ENCODE measurements at regions of chrX and their contacts with region 1.

Region 1: GRCh38 chrX:16882702-16883486 is 12.7 kb upstream of the RBBP7 start:
- DNase-seq: peak; percentile 73
- H3K4me3 Mint-ChIP-seq: peak overlapping the region; percentile 56
- H3K27ac Mint-ChIP-seq: no peak overlapping the region
- H3K4me1 Mint-ChIP-seq: peaks cover 8% of the 10 kb centered on the region
- H3K27me3 Mint-ChIP-seq: peaks cover 13% of the 10 kb centered on the region

Region 2: DNA sequence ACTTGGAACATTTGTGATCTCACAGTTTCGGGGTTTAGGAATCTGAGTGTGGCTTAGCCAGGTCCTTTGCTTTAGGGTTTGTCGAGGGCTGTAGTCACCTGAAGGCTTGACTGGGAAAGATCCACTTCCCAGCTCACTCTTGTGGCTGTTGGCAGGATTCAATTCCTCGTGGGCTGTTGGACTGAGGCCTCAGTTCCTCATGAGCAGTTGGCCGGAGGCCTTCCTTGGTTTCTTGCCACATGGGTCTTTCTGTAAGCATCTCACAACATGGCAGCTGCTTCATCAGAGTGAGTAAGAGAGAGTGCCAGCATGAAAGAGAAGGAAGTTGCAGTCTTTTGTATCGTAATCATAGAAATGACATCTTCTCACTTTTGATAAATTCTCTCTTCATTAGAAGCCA is 85.5 kb before region 1 on chrX:
- CTCF ChIA-PET with region 1: no interaction called
- DNase-seq: no peak
- H3K4me3 Mint-ChIP-seq: no peak overlapping the region
- H3K27ac Mint-ChIP-seq: no peak overlapping the region
- H3K4me1 Mint-ChIP-seq: no peaks in the 10 kb centered on the region
- H3K27me3 Mint-ChIP-seq: no peaks in the 10 kb centered on the region

Region 3: GRCh38 chrX:17046478-17047097 is 163.7 kb after region 1 on chrX:
- CTCF ChIA-PET with region 1: interaction called, 41 read pairs
- DNase-seq: peak; percentile 55
- H3K4me3 Mint-ChIP-seq: no peak overlapping the region
- H3K27ac Mint-ChIP-seq: no peak overlapping the region
- H3K4me1 Mint-ChIP-seq: no peaks in the 10 kb centered on the region
- H3K27me3 Mint-ChIP-seq: no peaks in the 10 kb centered on the region

Region 4: GRCh38 chrX:17082831-17083230 is 199.9 kb after region 1 on chrX:
- CTCF ChIA-PET with region 1: interaction called, 12 read pairs
- DNase-seq: no peak
- H3K4me3 Mint-ChIP-seq: no peak overlapping the region
- H3K27ac Mint-ChIP-seq: no peak overlapping the region
- H3K4me1 Mint-ChIP-seq: no peaks in the 10 kb centered on the region
- H3K27me3 Mint-ChIP-seq: no peaks in the 10 kb centered on the region